Calu3 (cell line): ENCODE measurements at regions of chr16 and their contacts with region 1.

Region 1: DNA sequence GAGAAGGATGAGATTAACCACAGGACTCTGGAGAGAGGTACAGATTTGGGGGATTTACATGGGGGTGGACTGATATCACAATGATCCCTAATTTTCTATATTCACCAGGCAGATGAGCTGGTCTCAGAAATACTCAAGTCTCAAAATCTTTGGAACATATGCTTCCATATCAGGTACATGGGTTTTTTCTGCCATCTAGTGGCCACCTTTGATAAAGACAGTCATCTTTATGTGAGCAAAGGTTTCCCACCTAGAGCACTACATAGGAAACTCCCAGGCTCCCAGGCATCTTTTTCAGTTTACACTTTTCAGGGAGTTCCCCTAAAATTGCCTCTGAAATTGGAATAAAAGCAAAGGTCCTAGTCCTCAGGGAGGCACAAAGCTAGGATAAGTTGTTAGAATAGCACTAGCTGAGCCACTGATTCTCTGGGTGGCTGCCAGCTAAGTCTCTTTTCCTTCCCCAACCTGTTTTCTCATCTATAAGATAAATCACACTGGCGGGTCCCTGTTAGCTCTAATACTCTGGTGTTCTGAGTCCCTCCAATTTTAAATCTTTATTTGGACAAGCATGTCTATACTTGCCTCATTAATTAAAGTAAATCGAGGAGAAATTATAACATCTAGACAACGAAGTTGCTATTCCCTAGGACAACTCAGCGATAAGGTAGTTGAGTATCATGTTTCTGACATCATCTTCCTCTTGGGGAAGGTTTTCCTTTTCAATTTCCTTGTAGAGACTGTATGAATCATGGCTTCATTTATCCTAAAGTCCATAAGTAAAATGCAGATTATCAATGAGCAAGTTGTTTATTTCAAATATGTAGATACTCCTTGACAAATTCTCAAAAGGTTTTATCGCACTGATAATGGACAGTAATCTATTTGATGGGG is 19.0 kb upstream of the MON1B start:
- DNase-seq: peak; percentile 66
- H3K4me3 Mint-ChIP-seq: no peak overlapping the region
- H3K27ac Mint-ChIP-seq: no peak overlapping the region
- H3K4me1 Mint-ChIP-seq: no peaks in the 10 kb centered on the region
- H3K27me3 Mint-ChIP-seq: peaks cover 64% of the 10 kb centered on the region
- CTCF ChIP-seq: peak; percentile 56

Region 2: DNA sequence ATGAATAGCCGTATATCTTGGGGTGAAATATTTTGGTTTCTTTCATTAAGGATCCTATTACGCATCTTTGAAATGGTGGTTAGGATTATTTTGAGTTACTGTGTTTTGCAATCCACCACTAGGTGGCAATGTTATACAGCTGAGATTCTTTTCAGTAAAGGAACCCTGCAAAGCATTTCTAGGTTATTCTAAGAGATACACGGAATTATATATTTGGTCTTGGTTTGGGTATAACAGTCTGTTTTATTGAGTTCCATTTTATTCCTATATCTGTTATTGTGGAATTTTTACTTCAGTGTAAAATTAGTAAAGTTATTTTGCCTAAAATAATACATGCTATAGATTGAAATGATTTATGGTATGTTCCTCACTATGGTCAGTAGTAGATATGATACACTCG is 1382.8 kb before region 1 on chr16:
- CTCF ChIA-PET with region 1: interaction called, 4 read pairs
- intact Hi-C with region 1: loop called (anchors 1 kb)
- DNase-seq: peak; percentile 38
- H3K4me3 Mint-ChIP-seq: no peak overlapping the region
- H3K27ac Mint-ChIP-seq: no peak overlapping the region
- H3K4me1 Mint-ChIP-seq: no peaks in the 10 kb centered on the region
- H3K27me3 Mint-ChIP-seq: peaks cover 29% of the 10 kb centered on the region
- CTCF ChIP-seq: peak; percentile 81

Region 3: DNA sequence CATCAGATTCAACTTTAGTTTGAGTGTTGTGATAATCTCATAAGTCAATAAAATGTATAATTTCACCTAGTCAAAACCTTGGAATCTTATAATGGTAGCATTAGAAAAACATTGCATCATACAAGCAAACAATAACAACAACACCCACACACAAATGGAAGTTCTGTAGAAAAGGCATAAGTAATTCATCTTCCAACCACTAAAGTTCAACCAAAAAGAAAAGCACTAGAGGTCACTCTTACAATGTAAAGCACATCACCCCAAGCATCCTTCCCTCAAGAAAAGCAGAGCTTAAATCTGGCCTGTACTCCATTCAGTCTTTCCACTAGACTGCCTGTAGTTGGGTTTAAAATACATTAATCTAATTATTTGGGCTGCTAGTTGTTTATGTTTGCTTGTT is 893.0 kb before region 1 on chr16:
- CTCF ChIA-PET with region 1: interaction called, 3 read pairs
- intact Hi-C with region 1: loop called (anchors 2 kb)
- DNase-seq: no peak
- H3K4me3 Mint-ChIP-seq: no peak overlapping the region
- H3K27ac Mint-ChIP-seq: no peak overlapping the region
- H3K4me1 Mint-ChIP-seq: no peaks in the 10 kb centered on the region
- H3K27me3 Mint-ChIP-seq: peaks cover 21% of the 10 kb centered on the region
- CTCF ChIP-seq: no peak

Region 4: DNA sequence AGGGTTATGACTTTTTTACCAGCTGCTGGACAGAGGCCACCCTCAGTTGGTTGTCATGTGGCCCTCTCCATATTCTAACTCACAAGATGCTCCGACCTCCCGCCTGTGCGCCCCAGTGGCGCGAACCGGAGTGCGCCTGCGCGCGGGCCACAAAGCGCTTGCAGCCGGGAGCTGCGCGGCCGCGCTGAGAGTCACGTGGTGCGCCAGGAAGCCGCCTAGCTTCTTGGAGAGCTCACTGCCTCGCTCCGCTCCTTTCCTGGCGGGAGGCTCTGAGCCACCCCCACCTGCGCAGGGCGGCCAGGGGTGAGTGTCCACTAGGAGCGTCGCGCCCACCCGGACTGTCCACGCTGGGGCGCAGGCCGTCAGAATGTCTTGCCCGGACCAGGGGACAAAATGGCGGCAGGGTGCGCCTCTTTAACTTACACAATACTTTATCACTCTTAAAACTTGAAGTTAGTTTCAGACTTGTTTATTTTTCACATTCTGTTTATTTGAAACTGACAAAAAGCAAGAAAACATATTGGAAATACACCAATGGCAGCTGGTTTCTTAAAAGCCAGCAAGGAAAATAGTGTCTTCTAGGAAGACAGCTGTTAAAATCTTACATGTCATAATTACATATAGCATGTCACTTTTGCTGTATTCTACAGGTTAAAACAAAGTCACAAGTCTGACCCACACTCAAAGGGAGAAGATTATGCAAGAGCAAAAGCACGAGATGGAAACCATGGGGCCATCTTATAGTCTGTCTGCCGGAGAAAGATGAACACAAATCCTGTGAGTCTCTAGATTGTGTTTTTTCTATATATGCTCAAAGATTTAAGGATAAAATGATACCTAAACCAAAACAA is 536.9 kb before region 1 on chr16:
- CTCF ChIA-PET with region 1: no interaction called
- intact Hi-C with region 1: no loop called
- DNase-seq: no peak
- H3K4me3 Mint-ChIP-seq: no peak overlapping the region
- H3K27ac Mint-ChIP-seq: no peak overlapping the region
- H3K4me1 Mint-ChIP-seq: no peaks in the 10 kb centered on the region
- H3K27me3 Mint-ChIP-seq: no peaks in the 10 kb centered on the region
- CTCF ChIP-seq: no peak

Region 5: DNA sequence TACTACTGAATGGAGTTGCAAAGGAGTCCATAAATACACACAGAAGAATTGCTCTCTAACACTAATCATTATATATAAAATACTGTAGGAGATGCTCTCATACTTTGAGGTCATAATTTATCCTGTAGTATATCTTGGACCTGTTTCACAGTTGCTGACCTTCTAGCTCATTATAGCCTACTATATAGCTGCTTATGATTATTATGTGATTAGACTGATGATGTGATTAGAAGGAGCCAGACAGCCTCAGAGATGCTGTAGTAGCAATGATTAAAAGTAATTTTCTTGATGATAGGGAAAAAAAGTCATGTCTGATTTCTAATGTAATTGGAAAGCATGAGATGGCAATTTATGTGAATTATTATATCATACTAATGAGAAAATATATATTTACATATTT is 439.1 kb before region 1 on chr16:
- CTCF ChIA-PET with region 1: no interaction called
- intact Hi-C with region 1: loop called (anchors 10 kb)
- DNase-seq: no peak
- H3K4me3 Mint-ChIP-seq: no peak overlapping the region
- H3K27ac Mint-ChIP-seq: no peak overlapping the region
- H3K4me1 Mint-ChIP-seq: no peaks in the 10 kb centered on the region
- H3K27me3 Mint-ChIP-seq: no peaks in the 10 kb centered on the region
- CTCF ChIP-seq: no peak

Region 6: DNA sequence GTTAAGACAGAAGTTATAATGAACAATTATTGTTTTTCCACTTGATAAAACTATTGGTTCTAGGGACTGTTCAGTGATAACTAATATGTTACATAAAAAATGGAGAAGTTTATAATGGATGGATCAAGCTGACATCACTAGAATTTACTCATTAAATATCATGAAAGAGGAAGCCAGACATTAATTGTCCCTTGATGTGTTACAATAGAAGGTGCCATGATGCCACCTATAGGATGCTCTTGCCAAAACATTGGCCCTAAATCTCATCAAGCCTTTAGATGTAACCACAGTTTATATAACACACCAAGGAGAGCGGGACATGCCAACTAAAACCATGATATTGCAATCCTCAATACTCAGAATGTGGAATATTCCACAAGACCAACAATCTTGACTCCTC is 128.9 kb before region 1 on chr16:
- CTCF ChIA-PET with region 1: no interaction called
- intact Hi-C with region 1: loop called (anchors 2 kb)
- DNase-seq: peak; percentile 30
- H3K4me3 Mint-ChIP-seq: no peak overlapping the region
- H3K27ac Mint-ChIP-seq: no peak overlapping the region
- H3K4me1 Mint-ChIP-seq: no peaks in the 10 kb centered on the region
- H3K27me3 Mint-ChIP-seq: no peaks in the 10 kb centered on the region
- CTCF ChIP-seq: peak; percentile 12

Region 7: GRCh38 chr16:77133706-77134105 is 38.3 kb before region 1 on chr16:
- CTCF ChIA-PET with region 1: no interaction called
- intact Hi-C with region 1: no loop called
- DNase-seq: no peak
- H3K4me3 Mint-ChIP-seq: no peak overlapping the region
- H3K27ac Mint-ChIP-seq: no peak overlapping the region
- H3K4me1 Mint-ChIP-seq: no peaks in the 10 kb centered on the region
- H3K27me3 Mint-ChIP-seq: no peaks in the 10 kb centered on the region
- CTCF ChIP-seq: no peak

Region 8: GRCh38 chr16:77190478-77191258 is 18.7 kb after region 1 on chr16 and contains the start of gene MON1B:
- CTCF ChIA-PET with region 1: no interaction called
- intact Hi-C with region 1: no loop called
- DNase-seq: peak; percentile 97
- H3K4me3 Mint-ChIP-seq: peak within 1 kb of the TSS; percentile 89
- H3K27ac Mint-ChIP-seq: peak within 1 kb of the TSS; percentile 100
- H3K4me1 Mint-ChIP-seq: peaks cover 42% of the 10 kb centered on the region
- H3K27me3 Mint-ChIP-seq: no peaks in the 10 kb centered on the region
- CTCF ChIP-seq: no peak
- total RNA-seq, gene MON1B: 88.1 and 91.3 TPM in 2 replicates